H1 (cell line): ENCODE measurements at regions of chr2 and their contacts with region 1.

Region 1: DNA sequence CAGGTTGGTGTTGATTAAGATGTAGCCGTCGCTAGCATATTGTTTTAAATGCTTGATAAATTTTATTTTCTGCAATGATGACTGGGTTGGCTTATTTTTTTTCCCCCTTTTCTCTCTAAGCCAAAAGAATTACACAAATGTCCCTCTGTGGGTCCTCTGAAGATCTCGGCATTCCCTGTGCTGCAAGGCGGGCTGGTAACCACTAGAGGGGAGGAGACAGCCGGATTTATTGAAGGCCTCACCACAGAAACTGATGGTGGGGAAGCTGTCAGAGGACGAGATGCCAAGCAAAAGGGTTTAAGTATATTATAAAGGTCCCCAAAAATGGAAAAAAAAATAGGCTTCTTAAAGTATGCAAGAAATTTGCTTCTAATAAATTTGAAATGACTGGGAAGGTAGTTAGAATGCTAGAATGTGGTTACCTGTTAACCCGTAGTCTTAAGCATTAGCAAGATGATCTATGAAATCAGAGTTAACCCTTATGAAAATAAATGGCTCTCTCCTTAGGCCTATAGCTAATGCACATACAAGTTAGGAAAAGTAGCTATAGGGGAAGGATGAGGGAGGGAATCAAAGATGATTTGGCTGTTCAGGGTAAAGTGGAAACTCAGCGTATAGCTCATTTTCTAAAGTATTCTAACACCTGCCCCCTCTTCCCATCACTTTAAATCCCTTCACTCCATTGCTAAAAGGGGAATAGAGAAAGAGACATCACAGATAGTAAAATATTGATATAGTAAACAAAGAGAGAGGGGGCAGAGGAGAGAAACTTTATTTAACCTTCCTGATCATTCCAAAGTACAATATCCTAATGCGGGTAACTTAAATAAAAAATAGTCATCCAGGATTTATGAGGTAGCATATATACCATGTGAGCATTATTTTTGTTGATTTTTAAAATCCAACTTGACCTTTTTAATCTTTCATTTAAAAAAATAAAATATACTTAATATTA is 894.5 kb upstream of the POU3F3 start:
- DNase-seq: peak; percentile 21 to 49
- H3K4me3 ChIP-seq: no peak overlapping the region
- H3K27ac ChIP-seq: no peak overlapping the region
- H3K4me1 ChIP-seq: no peaks in the 10 kb centered on the region
- H3K27me3 ChIP-seq: no peaks in the 10 kb centered on the region
- CTCF ChIP-seq: peak; percentile 74 to 85 (median 77)
- EP300 ChIP-seq: no peak
- POLR2A ChIP-seq: no peak
- RAD21 ChIP-seq: peak; percentile 88 to 91

Region 2: DNA sequence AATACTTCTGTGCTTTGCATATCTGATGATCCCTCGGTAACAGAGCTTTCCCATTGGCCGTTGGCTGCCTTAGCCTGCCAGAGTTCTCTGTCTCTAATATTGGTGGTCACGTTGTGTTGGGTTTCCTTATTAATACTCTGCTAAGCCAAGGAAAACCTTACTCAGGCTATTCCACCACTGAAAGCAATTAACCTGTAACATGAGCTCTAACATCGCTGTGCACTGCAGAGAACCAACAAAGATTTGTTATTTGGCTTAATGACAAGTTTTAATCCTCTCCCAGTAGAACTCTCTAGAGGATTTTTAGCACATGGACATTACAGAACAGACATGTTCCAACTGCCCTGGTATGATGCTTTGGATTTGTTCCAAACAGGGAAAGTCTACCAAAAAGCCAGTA is 68.6 kb after region 1 on chr2:
- CTCF ChIA-PET with region 1: interaction called, 10 read pairs
- POLR2A ChIA-PET with region 1: no interaction called
- DNase-seq: no peak
- H3K4me3 ChIP-seq: no peak overlapping the region
- H3K27ac ChIP-seq: no peak overlapping the region
- H3K4me1 ChIP-seq: peaks cover 2 to 9% (median 4%) of the 10 kb centered on the region in 4 experiments; a peak in 5 of 7 replicates
- H3K27me3 ChIP-seq: no peaks in the 10 kb centered on the region
- CTCF ChIP-seq: no peak
- EP300 ChIP-seq: no peak
- POLR2A ChIP-seq: no peak
- RAD21 ChIP-seq: no peak

Region 3: DNA sequence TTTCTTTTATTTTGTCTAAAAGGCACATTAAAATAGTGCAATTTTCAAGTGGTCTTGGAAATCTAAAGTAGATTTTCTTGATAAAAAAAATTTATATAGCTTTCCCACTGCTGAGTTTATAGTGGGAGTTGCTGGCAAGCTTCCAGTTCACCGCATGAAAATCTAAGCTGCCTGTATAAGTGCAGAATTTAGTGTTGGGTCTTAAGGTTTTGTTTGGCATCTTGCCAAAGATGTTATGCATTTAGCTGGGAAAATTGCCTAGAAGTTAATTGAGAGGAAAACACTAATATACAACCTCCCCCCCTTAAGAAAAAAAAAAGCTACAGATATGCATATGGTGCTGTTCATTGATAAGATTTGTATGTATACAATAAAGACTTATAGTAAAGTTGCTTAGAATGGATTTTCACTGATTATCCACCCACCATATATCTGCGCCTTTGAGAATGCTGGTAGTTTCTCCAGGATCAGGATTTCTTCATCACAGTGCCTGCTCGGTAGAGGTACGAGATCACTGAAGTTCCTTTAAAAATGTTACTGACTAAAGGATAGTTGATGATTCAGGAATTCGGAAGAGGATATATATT is 91.3 kb after region 1 on chr2:
- CTCF ChIA-PET with region 1: no interaction called
- POLR2A ChIA-PET with region 1: no interaction called
- DNase-seq: no peak
- H3K4me3 ChIP-seq: no peak overlapping the region
- H3K27ac ChIP-seq: no peak overlapping the region
- H3K4me1 ChIP-seq: peaks cover 0 to 2% (median 1%) of the 10 kb centered on the region in 4 experiments; a peak in 2 of 7 replicates
- H3K27me3 ChIP-seq: no peaks in the 10 kb centered on the region
- CTCF ChIP-seq: no peak
- EP300 ChIP-seq: no peak
- POLR2A ChIP-seq: no peak
- RAD21 ChIP-seq: no peak